ENCODE measurements at regions of chr2 and their contacts with region 1.

Region 1: GRCh38 chr2:171319164-171319810 is 114.5 kb downstream of the METTL8 start:
- DNase-seq: peak; percentile 78
- H3K4me3 Mint-ChIP-seq: peak overlapping the region; percentile 69
- H3K27ac Mint-ChIP-seq: peak overlapping the region; percentile 99
- H3K4me1 Mint-ChIP-seq: peaks cover 61% of the 10 kb centered on the region
- H3K27me3 Mint-ChIP-seq: no peaks in the 10 kb centered on the region

Region 2: GRCh38 chr2:171086352-171087290 is 232.7 kb before region 1 on chr2:
- CTCF ChIA-PET with region 1: no interaction called
- POLR2A ChIA-PET with region 1: no interaction called
- intact Hi-C with region 1: no loop called
- DNase-seq: peak; percentile 66
- H3K4me3 Mint-ChIP-seq: peak overlapping the region; percentile 64
- H3K27ac Mint-ChIP-seq: peak overlapping the region; percentile 43
- H3K4me1 Mint-ChIP-seq: peaks cover 58% of the 10 kb centered on the region
- H3K27me3 Mint-ChIP-seq: no peaks in the 10 kb centered on the region

Region 3: DNA sequence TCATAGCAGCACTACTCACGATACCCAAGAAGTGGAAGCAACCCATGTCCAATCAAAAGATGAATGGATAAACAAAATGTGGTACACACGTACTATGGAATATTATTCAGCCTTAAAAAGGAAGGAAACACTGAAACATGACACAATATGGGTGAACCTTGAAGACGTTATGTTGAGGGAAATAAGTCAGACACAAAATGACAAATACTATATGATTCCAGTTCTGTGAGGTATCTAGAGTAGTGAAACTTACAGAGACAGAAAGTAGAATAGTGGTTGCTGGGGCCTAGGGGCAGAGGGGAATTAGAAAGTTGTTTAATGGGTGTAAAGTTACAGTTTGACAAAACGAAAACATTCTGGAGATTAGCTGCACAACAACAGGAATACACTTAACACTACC is 183.3 kb before region 1 on chr2:
- CTCF ChIA-PET with region 1: no interaction called
- POLR2A ChIA-PET with region 1: interaction called, 3 read pairs
- intact Hi-C with region 1: loop called (anchors 1 kb)
- DNase-seq: peak; percentile 55
- H3K4me3 Mint-ChIP-seq: peak overlapping the region; percentile 27
- H3K27ac Mint-ChIP-seq: peak overlapping the region; percentile 78
- H3K4me1 Mint-ChIP-seq: peaks cover 69% of the 10 kb centered on the region
- H3K27me3 Mint-ChIP-seq: no peaks in the 10 kb centered on the region

Region 4: DNA sequence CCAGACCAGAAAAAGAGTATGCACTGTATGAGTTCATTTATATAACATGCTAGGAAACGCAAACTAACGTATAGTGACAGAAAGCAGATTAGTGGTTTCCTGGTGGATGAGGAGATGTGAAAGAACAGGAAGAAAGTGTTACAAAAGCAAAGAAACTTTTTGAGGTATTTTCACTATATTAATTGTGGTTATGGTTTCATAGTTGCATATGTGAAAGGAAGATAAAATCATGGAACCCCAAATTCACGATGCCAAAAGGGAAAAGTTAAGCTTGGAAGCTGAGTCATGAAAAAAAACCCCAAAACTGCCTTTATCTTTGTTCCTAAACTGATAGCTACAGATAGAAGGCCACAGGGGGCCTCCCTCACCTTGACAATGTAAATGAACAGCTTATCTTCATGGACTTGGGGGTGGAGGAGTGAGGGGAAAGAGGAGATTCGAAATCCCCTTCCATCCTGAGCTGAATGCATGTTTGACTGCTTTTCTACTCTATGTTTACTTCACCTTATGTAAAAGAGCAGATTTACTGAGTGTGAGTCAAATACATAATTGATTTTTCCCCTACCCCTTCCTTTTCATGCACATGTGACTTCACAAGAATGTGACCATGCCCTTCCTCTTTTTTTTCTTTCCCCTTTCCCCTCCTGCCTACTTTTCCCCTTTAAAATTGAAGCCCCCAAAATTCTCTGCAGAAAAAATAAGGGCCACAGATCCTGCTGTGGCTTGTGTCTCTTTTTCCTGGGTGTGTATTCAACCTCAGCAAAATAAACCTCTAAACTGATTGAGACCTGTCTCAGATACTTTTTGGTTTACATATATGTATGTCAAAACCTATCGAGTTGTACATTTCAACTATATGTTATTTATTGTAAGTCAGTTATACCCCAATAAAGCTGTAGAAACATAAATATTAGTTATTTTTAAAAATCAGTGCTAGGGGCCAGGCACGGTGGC is 58.5 kb before region 1 on chr2:
- CTCF ChIA-PET with region 1: interaction called, 9 read pairs
- POLR2A ChIA-PET with region 1: interaction called, 16 read pairs
- intact Hi-C with region 1: loop called (anchors 1 kb)
- DNase-seq: peak; percentile 50
- H3K4me3 Mint-ChIP-seq: no peak overlapping the region
- H3K27ac Mint-ChIP-seq: peak overlapping the region; percentile 19
- H3K4me1 Mint-ChIP-seq: peaks cover 31% of the 10 kb centered on the region
- H3K27me3 Mint-ChIP-seq: no peaks in the 10 kb centered on the region

Region 5: DNA sequence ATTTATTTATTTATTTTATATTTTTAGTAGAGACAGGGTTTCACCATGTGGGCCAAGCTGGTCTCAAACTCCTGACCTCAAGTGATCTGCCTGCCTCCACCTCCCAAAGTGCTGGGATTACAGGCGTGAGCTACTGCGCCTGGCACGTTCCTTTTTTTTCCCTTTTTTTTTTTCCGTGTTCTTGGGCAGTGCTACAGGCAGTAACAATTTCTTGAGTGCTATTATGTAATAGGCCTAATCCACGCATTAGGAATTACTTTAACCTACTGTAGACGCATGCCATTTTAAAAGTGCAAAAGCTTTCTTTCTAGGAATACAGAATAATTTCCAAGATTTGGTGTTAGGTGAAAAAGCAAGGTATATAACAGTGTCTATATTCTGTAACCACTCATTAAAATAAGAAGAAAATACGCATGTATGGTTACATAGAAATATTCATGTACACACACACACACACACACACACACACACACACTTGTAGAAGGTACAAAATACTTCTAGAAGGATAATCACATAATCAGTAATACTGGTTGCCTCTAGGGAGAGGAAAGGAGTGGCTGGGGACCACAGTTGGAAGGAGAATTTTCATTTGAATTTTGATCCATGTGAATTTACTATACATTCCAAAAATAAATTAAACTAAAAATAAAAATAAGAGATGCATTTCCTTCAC is 22.2 kb after region 1 on chr2:
- CTCF ChIA-PET with region 1: no interaction called
- POLR2A ChIA-PET with region 1: no interaction called
- intact Hi-C with region 1: no loop called
- DNase-seq: no peak
- H3K4me3 Mint-ChIP-seq: no peak overlapping the region
- H3K27ac Mint-ChIP-seq: no peak overlapping the region
- H3K4me1 Mint-ChIP-seq: peaks cover 20% of the 10 kb centered on the region
- H3K27me3 Mint-ChIP-seq: no peaks in the 10 kb centered on the region

Region 6: GRCh38 chr2:171404261-171404660 is 85.0 kb after region 1 on chr2:
- CTCF ChIA-PET with region 1: no interaction called
- POLR2A ChIA-PET with region 1: no interaction called
- intact Hi-C with region 1: loop called (anchors 1 kb)
- DNase-seq: no peak
- H3K4me3 Mint-ChIP-seq: no peak overlapping the region
- H3K27ac Mint-ChIP-seq: no peak overlapping the region
- H3K4me1 Mint-ChIP-seq: peaks cover 46% of the 10 kb centered on the region
- H3K27me3 Mint-ChIP-seq: no peaks in the 10 kb centered on the region

Region 7: DNA sequence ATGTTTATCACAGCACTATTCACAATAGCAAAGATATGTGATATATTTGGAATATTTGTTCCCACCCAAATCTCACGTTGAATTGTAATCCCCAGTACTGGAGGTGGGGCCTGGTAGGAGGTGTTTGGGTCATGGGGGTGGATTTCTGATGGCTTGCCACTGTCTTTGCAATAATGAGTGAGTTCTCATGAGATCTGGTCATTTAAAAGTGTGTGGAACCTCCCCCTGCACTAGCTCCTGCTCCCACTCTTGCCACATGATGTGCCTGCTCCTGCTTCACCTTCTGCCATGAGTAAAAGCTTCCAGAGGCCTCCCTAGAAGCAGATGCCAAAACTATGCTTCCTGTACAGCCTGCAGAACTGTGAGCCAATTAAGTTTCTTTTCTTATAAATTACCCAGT is 295.8 kb after region 1 on chr2:
- CTCF ChIA-PET with region 1: no interaction called
- POLR2A ChIA-PET with region 1: no interaction called
- intact Hi-C with region 1: no loop called
- DNase-seq: no peak
- H3K4me3 Mint-ChIP-seq: no peak overlapping the region
- H3K27ac Mint-ChIP-seq: no peak overlapping the region
- H3K4me1 Mint-ChIP-seq: no peaks in the 10 kb centered on the region
- H3K27me3 Mint-ChIP-seq: no peaks in the 10 kb centered on the region

Region 8: GRCh38 chr2:172442072-172442895 is 1123.0 kb after region 1 on chr2:
- CTCF ChIA-PET with region 1: no interaction called
- POLR2A ChIA-PET with region 1: no interaction called
- intact Hi-C with region 1: loop called (anchors 5 kb)
- DNase-seq: peak; percentile 81
- H3K4me3 Mint-ChIP-seq: peak overlapping the region; percentile 40
- H3K27ac Mint-ChIP-seq: peak overlapping the region; percentile 66
- H3K4me1 Mint-ChIP-seq: peaks cover 63% of the 10 kb centered on the region
- H3K27me3 Mint-ChIP-seq: no peaks in the 10 kb centered on the region